ENCODE measurements at regions of chr11 and their contacts with region 1.

Region 1: GRCh38 chr11:114262681-114263512 is 33.3 kb upstream of the NNMT start:
- DNase-seq: no peak
- ATAC-seq: peak; percentile 43

Region 2: DNA sequence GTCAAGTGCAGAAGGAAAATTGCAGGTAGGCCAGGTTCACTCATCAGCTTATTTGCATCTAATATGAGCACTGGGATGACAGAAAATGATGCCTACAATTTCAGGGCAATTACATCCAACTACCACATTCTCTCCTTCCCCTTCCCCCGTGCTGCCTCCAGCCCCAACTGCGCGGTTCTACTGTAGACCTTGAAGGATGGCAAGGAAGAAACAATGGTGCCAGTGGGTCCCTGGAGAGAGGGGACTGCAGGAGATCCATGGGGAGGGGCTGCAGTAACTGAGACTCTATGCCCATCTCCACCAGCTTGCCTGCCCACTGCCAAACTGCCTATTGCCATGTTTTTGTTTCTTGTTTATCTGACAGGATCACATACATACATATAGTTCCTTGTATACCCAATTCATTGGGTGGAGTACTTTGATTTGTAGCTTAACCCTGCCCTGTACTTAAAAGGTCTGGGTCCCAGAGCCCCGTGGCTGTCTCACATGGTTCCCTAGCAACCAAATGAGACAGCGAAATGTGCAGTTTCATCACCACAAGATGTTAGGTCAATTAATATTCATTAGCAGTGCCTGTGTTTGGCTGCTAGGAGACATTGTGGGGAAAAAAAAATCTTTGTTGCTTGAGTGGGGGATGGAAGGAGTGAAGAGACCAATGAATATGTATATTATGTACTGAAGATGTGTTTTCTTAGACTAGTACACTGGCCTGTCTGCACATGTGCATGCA is 1748.7 kb before region 1 on chr11:
- intact Hi-C with region 1: no loop called
- DNase-seq: no peak
- ATAC-seq: no peak

Region 3: DNA sequence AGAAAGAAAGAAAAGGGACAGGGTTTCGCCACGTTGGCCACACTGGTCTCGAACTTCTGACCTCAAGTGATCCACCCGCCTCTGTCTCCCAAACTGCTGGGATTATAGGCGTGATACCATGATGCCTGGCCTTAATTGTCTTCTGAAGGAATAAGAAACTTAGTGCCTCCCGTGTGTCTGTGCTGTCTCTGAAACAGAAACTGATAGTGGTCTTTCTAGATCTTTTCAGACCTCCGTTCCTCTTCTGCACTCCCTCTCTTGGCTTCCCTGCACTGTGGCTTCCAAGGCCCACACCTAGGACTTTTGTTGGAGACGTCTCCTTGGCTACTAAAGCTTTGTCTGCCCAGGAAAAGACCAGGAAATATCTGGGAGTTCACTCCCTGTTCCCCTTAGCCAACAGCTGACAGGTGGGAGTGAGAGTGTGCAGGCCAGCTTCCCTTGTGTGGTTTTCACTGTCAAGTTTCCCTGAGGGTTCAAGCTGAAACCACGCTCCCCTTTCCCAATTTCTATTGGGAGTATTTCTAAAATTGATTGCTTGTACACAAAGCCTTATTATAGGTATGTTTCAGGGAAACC is 368.4 kb before region 1 on chr11:
- intact Hi-C with region 1: loop called (anchors 5 kb)
- DNase-seq: no peak
- ATAC-seq: no peak

Region 4: GRCh38 chr11:113994077-113994954 is 268.6 kb before region 1 on chr11:
- intact Hi-C with region 1: loop called (anchors 10 kb)
- DNase-seq: no peak
- ATAC-seq: peak; percentile 48

Region 5: DNA sequence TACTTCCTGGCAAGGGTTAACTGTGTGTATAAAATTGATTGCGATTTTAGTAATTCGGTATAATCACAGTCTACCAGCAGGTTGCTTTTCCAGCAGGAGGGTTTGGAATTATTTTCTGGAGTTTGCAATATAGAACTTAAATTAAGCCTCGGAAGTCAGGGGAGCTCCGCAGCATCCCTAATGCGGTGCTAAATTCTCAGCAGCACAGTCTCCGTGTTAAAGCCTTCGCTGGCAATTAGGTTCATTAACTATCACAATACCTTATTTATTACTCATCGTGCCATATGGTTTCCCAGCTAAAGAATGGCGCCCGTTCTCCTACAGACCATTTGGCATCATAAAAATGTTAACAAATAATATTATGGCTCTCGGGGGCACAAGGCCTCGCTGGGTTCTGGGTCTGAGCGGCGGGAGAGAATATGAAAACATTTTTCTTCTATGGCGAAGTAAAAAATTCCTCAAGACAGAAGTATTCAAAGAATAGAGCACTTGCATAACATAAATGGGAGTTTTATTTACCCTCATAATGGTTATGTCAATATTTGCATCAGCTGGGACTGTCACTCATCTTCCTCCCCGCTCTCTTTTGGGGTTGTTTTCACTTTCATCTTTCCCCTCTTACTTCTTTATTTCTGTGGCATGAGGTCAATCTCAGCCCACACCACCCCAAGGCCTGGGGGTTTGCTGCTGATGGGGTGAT is 231.5 kb before region 1 on chr11:
- intact Hi-C with region 1: loop called (anchors 5 kb)
- DNase-seq: no peak
- ATAC-seq: no peak

Region 6: DNA sequence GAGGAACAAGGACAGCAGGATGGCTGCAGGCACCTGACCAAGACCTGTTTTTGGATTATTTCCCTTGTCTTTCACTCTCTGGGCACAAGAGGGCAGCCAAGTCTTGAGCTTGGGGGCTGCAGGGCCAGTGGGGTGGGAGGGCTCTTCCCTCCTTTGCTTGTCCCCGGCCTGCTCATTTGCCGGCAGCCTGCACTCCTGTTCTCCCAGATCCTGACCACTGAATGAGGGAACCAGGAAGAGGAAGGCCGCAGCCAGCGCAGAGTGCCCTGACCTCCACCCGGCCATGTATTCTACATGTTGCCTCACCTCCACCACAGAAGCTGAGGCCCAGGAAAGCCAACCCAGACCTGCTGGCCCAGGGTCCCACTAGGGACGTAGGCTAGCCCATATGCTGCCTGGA is 17.8 kb after region 1 on chr11:
- intact Hi-C with region 1: no loop called
- DNase-seq: peak; percentile 73
- ATAC-seq: peak; percentile 80

Region 7: GRCh38 chr11:114295676-114296604 is 33.0 kb after region 1 on chr11 and contains the start of gene NNMT:
- intact Hi-C with region 1: no loop called
- DNase-seq: peak; percentile 77
- ATAC-seq: peak; percentile 87
- total RNA-seq, gene NNMT: 322 TPM

Measured in sciatic nerve (tissue), 2 donors.